HEK293 (cell line): ENCODE measurements at regions of chr5 and their contacts with region 1.

Region 1: DNA sequence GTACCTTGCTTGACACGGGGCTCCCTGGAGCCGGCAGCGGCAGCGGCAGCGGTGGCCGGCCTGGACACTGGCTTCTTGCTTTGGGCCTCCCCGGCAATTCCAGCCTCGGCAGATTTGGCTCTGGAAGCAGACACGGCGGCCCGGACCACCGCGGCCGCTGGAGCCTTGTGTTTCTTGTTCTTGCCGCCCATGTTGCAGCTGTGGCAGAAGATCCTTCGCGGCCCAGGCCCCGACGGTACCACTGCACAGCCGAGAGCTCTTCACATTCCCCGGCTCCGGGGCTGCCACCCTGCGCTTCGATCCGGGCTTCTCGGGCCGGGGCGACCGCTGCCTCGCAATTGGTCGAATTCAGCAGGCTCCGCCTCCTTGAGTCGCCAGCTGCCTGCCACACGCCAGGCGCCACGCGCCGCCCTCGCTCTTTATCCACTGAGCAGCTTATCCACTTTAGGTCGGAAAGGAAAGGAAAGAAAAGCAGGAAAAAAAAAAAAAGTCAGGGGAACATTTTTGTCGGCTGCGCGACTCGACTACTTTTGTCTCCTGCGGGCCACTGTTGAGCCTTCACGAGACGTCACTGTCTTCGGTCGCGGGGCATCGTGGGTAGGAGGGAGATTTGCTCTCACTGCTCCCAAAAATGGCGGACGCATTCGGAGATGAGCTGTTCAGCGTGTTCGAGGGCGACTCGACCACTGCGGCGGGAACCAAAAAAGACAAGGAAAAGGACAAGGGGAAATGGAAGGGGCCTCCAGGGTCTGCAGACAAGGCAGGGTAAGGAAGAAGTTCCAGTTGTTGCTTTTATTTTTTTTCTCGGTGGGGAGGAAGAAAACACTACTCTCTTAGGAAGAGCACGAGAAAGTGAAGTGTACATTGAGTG is at the starts of genes DHX29 and MTREX:
- H3K4me3 ChIP-seq: peak within 1 kb of the TSS; percentile 78
- H3K27ac ChIP-seq: peak within 1 kb of the TSS; percentile 92
- H3K4me1 ChIP-seq: peaks cover 3% of the 10 kb centered on the region; the same call in 1 of the 2 replicates
- CTCF ChIP-seq: no peak

Region 2: GRCh38 chr5:55172051-55172899 is 135.3 kb before region 1 on chr5:
- CTCF ChIA-PET with region 1: interaction called, 10 read pairs
- POLR2A ChIA-PET with region 1: interaction called, 4 read pairs
- H3K4me3 ChIP-seq: peak overlapping the region; percentile 49
- H3K27ac ChIP-seq: no peak overlapping the region
- H3K4me1 ChIP-seq: no peaks in the 10 kb centered on the region; the same call in 1 of the 2 replicates
- CTCF ChIP-seq: peak; percentile 83

Region 3: DNA sequence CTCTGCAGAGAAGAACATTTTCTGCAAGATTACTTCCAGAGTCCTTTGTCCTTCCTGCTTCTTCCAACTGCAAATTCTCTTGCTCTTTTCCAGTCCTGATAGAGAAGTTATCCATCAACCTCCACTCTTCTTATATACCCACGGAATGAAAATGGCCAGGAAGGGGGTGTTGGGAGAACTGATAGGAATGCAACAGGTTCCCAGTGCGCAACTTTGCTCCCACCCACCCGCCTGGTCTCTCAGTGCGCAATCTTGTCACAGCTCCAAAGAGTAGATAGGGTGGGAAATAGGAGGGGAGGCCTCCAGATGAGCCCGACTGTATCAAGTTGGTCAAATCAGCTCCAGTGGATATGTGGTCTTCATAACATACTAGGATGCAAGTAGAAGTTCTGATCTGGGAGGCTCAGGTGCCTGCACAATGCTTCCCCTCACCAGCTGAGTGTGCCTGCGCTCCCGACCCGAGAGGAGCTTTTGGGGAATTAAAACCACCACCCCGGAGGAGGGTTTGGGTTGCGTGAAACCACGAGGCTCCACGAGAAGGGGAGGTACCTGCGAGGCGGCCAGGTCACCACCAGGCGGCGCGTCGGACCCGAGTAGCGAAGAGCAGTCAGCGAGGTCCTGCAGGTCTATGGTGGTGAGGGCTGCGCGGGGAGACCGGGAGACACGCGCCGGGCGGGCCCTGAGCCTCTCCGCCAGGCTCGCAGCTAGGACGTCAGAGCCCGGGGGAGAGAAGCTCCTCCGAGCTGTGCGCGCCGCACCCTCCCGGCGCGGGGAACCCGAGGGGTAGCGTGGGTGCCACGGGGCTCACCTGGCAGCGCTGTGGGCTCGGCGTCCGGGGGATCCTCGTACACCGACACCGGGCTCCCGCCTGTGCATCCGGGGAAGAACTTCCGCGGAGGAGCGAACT is 81.3 kb before region 1 on chr5:
- CTCF ChIA-PET with region 1: interaction called, 4 read pairs
- POLR2A ChIA-PET with region 1: interaction called, 38 read pairs
- H3K4me3 ChIP-seq: peak overlapping the region; percentile 49
- H3K27ac ChIP-seq: peak overlapping the region; percentile 92
- H3K4me1 ChIP-seq: no peaks in the 10 kb centered on the region; the same call in 1 of the 2 replicates
- CTCF ChIP-seq: peak; percentile 95

Region 4: DNA sequence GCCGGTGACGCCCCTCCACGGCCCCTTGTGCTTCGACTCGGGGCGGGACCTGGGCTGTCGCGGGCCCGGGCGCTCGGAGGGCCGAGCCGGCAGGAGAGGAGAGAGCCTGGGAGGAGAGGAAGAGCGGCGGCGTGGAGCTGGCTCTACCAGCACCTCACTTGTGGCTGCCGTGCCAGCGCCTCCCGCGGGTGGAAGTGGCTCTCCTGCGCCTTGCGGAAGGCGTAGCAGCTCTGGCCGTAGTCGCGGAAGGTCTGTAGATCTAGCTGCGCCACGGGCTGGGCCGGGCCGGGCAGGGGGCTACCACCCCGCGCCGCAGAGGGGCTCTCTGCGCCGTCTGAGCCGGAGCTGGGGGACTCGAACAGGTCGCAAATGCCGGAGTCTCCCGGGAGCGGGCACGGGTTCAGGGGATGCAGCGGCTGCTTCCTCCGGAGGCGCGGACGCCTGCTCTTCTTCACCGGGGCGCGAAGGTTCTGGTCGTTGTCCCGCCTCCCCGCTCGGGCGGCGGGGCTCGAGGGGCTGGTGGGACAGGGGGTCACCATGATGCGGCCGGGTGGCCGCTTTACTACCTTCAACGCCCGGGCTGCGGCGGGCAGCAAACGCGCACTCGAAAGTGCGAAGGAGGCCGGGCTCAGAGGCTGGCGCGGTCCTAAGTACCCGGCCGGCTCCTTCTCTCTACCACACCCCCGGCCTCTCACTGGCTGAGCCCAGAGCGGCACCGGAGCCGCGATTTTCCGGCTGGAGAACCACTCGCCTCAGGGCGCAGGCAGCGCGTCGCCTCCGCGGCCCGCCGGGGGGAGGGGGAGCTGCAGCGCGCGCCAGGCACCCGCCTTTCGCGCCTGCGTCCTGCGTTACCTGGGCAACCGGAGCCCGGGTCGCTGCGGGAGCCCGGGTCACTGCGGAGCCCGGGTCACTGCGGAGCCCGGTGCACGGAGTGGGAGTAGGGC is 74.4 kb before region 1 on chr5 and contains the start of gene CCNO:
- CTCF ChIA-PET with region 1: interaction called, 3 read pairs
- POLR2A ChIA-PET with region 1: interaction called, 38 read pairs
- H3K4me3 ChIP-seq: peak within 1 kb of the TSS; percentile 49
- H3K27ac ChIP-seq: peak within 1 kb of the TSS; percentile 73; the same call in 1 of the 2 replicates
- H3K4me1 ChIP-seq: no peaks in the 10 kb centered on the region
- CTCF ChIP-seq: peak; percentile 77